Left lung (tissue), 14 donors: ENCODE measurements at regions of chr22 and their contacts with region 1.

Region 1: DNA sequence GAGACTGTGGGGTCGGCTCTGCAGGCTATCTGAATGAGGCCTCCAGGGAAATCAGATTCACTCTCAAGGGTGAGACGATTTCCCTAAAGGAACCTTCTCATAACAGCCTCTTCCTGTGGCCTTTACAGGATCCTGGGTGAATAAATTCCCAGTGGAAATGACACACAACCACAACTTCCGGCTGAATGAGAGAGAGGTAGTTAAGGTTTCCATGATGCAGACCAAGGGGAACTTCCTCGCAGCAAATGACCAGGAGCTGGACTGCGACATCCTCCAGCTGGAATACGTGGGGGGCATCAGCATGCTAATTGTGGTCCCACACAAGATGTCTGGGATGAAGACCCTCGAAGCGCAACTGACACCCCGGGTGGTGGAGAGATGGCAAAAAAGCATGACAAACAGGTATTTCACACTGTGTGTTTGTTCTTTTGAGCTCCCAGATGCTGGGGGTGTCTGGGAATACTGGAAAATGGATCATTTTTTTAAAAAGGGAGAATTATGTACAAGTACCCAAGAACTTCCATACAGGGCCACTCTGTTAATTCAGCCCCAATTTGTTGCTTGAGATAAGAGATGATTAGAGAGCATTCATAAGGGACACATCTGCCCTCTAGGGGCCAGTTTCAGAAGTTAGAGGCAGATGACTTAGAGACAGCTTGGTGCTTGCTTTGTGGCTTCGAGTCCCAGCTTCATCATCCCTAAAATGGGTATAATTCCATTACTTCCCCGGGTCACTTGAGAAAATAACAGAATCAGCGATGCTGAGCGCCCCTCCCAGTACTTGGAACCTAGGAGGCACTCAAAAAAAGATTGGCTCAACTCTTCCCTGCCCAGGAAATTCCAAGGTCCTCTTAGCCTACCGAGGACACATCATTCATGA is 10.2 kb downstream of the SERPIND1 start:
- DNase-seq: peak in 2 of 4 donors; percentile 14 to 44
- ATAC-seq: peak; percentile 83
- H3K4me3 ChIP-seq: no peak overlapping the region
- H3K27ac ChIP-seq: peak overlapping the region in 1 of 2 donors; percentile 33
- H3K4me1 ChIP-seq: peaks cover 0 to 33% of the 10 kb centered on the region in 2 donors
- H3K27me3 ChIP-seq: no peaks in the 10 kb centered on the region
- CTCF ChIP-seq: peak; percentile 56 to 64

Region 2: GRCh38 chr22:20725987-20726558 is 58.0 kb before region 1 on chr22:
- intact Hi-C with region 1: loop called in 1 of 2 experiments (anchors 10 kb)
- DNase-seq: no peak
- ATAC-seq: no peak
- H3K4me3 ChIP-seq: no peak overlapping the region
- H3K27ac ChIP-seq: no peak overlapping the region
- H3K4me1 ChIP-seq: no peaks in the 10 kb centered on the region
- H3K27me3 ChIP-seq: no peaks in the 10 kb centered on the region
- CTCF ChIP-seq: no peak

Region 3: DNA sequence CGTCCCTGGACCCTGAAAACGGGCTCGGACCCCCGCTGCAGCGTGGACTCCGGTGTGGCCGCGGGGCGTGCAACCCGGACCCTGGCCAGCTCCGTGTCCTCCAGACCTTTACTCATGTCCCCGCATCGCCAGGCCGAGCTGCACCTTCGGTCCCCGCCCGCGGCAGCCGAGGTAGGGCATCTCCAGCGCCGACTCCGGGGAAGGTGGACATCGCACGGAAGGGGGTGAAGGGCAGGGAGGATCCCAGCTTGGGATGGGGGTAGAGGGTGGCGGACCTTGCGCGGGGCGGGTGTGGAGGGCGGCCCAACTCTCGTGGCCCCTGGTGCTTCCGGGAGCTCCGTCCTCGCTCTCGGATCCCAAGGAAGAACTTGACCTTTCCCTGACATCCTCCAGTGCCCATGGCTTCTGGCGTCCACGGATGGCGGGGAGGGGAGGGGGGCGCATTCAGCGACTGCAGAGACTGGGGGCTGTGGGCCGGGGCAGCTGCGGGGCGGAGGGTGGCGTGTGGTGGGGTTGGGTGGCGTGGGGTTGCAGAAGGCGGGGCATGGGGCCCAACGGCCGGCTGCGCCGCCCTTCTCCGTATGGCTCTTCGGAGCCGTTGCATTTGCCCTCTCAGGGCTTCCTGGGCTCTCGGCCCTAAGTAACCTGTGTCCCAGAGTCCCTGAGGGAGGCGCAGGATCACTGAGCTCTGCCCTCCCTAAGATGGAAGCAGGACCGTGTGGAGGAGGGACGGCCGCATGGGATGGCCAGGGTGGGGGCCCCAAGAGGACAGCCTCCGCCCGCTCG is 173.4 kb after region 1 on chr22:
- intact Hi-C with region 1: no loop called
- DNase-seq: peak in 2 of 4 donors; percentile 54 to 88
- ATAC-seq: peak; percentile 79
- H3K4me3 ChIP-seq: peak overlapping the region; percentile 48
- H3K27ac ChIP-seq: peak overlapping the region; percentile 2 to 34
- H3K4me1 ChIP-seq: peaks cover 0 to 34% of the 10 kb centered on the region in 2 donors
- H3K27me3 ChIP-seq: peaks cover 0 to 15% of the 10 kb centered on the region in 2 donors
- CTCF ChIP-seq: no peak